Activated T-helper 2 cell treated with anti-CD3 and anti-CD28 coated beads, Interferon-gamma antibody, Interleukin-2, Interleukin-4, amounts not matched to agents 10 μg/mL and 5 μg/mL and 100 μg/mL, durations not matched to agents 14 hours and 24 hours and 36 hours (primary cell): ENCODE measurements at regions of chr4 and their contacts with region 1.

Region 1: GRCh38 chr4:55635741-55636655 is at the start of gene NMU:
- DNase-seq: peak; percentile 9
- H3K4me3 Mint-ChIP-seq: peak within 1 kb of the TSS; percentile 49
- H3K27ac Mint-ChIP-seq: no peak within 1 kb of the TSS
- H3K4me1 Mint-ChIP-seq: peaks cover 12% of the 10 kb centered on the region
- H3K27me3 Mint-ChIP-seq: peaks cover 61% of the 10 kb centered on the region
- total RNA-seq, gene NMU: 0.25 TPM in 1 of 2 replicates, not detected in the other

Region 2: GRCh38 chr4:55458164-55458563 is 177.8 kb before region 1 on chr4:
- intact Hi-C with region 1: loop called (anchors 10 kb)
- DNase-seq: no peak
- H3K4me3 Mint-ChIP-seq: no peak overlapping the region
- H3K27ac Mint-ChIP-seq: no peak overlapping the region
- H3K4me1 Mint-ChIP-seq: no peaks in the 10 kb centered on the region
- H3K27me3 Mint-ChIP-seq: no peaks in the 10 kb centered on the region